ENCODE measurements at regions of chr12 and their contacts with region 1.

Region 1: DNA sequence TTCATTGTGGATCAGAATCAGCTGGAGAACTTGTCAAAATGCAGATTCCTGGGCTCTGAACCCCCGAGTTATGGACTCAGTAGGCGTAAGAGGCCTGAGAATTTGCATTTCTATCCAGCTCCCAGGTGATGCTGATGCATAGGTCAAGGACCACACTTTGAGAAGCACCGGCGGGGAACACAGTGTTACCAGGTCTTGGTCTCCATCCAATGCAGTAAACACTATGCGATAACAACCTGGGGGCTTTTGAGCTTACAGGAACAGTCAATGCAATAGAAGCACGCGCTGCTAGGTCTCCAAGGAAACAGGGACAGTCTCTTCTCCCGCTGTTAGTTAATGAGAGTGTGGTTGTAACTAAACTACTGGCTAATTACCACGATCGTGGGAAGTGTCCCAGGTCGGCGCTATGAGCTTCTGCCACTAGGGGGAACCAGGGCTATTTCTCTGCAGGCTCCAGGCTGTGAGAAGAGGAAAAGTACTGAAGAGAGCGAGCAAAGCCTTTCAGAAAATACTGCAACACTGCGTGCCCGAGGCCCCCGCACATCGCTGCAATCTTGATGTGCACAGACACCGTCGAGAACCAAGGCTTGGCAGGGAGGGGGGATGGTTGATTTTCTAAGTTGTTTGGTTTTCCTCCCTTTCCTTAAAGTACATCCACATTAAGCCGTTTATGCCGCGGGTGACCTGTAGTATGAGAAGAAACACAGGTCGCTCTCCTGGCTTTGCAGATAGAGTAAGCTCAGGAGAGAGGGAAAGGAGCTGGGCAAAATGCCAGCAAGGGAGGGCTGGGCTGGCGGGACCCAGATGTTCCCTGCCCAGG is 52.0 kb upstream of the KCNA1 start:
- DNase-seq: peak; percentile 20
- H3K4me3 ChIP-seq: no peak overlapping the region
- H3K27ac ChIP-seq: no peak overlapping the region
- H3K27me3 ChIP-seq: peaks cover 13% of the 10 kb centered on the region
- CTCF ChIP-seq: peak; percentile 97

Region 2: GRCh38 chr12:4545195-4545594 is 312.5 kb before region 1 on chr12:
- CTCF ChIA-PET with region 1: no interaction called
- POLR2A ChIA-PET with region 1: no interaction called
- DNase-seq: no peak
- H3K4me3 ChIP-seq: no peak overlapping the region
- H3K27ac ChIP-seq: no peak overlapping the region
- H3K27me3 ChIP-seq: no peaks in the 10 kb centered on the region
- CTCF ChIP-seq: no peak

Region 3: GRCh38 chr12:4899364-4899763 is 41.7 kb after region 1 on chr12:
- CTCF ChIA-PET with region 1: interaction called, 14 read pairs
- POLR2A ChIA-PET with region 1: no interaction called
- DNase-seq: no peak
- H3K4me3 ChIP-seq: no peak overlapping the region
- H3K27ac ChIP-seq: no peak overlapping the region
- H3K27me3 ChIP-seq: no peaks in the 10 kb centered on the region
- CTCF ChIP-seq: no peak

Region 4: GRCh38 chr12:4997939-4998338 is 140.3 kb after region 1 on chr12:
- CTCF ChIA-PET with region 1: interaction called, 40 read pairs
- POLR2A ChIA-PET with region 1: no interaction called
- DNase-seq: peak; percentile 39
- H3K4me3 ChIP-seq: no peak overlapping the region
- H3K27ac ChIP-seq: no peak overlapping the region
- H3K27me3 ChIP-seq: peaks cover 21% of the 10 kb centered on the region
- CTCF ChIP-seq: no peak

Region 5: GRCh38 chr12:5022465-5023061 is 164.9 kb after region 1 on chr12:
- CTCF ChIA-PET with region 1: interaction called, 10 read pairs
- POLR2A ChIA-PET with region 1: no interaction called
- DNase-seq: no peak
- H3K4me3 ChIP-seq: no peak overlapping the region
- H3K27ac ChIP-seq: no peak overlapping the region
- H3K27me3 ChIP-seq: peaks cover 20% of the 10 kb centered on the region
- CTCF ChIP-seq: peak; percentile 89

Region 6: GRCh38 chr12:5073853-5074252 is 216.2 kb after region 1 on chr12:
- CTCF ChIA-PET with region 1: interaction called, 194 read pairs
- POLR2A ChIA-PET with region 1: no interaction called
- DNase-seq: no peak
- H3K4me3 ChIP-seq: no peak overlapping the region
- H3K27ac ChIP-seq: no peak overlapping the region
- H3K27me3 ChIP-seq: peaks cover 15% of the 10 kb centered on the region
- CTCF ChIP-seq: peak; percentile 56